BJ (cell line): ENCODE measurements at regions of chr11 and their contacts with region 1.

Region 1: DNA sequence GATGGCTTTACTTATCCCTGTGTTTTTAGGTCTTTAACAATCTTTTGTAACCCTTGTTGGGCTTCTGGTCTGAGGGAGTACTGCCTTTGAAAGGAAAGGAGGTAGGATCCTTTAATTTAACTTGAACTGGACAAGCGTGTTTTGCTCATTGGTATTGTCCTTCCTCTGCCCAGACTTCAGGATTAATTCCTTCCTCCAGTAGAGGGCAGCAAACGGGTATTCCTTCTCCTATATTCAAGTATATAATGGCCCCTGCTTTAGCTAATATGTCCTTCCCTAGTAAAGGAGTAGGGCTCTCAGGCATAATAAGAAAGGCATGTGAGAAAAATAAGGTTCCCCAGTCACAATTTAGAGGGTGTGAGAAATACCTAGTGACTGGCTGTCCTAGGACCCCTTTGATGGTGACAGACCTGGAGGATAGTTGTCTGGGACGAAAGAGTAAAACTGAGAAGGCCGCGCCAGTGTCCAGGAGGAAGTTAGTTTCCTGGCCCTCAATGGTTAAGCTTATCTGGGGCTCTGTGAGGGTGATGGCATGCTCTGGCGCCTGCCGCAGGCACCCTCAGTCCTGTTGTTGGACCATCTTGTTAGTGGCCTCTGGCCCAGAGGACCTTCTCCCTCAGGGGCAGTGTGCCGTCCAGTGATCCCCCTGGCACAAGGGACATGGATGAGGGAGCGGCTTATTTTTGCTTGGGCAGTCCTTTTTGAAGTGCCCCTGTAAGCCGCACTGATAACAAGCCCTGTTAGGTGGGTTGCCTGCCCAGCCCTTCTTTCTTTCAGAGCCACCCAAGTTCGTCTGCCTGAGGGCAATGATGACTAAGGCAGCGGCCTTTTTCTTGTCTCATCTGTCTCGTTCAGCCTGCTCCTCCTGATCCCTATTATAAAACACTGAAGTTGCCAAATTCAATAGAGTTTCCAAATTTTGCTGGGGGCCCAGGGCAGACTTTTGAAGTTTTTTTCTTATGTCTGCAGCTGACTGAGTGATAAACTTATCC is 51.8 kb downstream of the C11orf71 start:
- DNase-seq: peak; percentile 19
- H3K4me3 ChIP-seq: no peak overlapping the region
- H3K27me3 ChIP-seq: no peaks in the 10 kb centered on the region
- CTCF ChIP-seq: peak; percentile 59

Region 2: DNA sequence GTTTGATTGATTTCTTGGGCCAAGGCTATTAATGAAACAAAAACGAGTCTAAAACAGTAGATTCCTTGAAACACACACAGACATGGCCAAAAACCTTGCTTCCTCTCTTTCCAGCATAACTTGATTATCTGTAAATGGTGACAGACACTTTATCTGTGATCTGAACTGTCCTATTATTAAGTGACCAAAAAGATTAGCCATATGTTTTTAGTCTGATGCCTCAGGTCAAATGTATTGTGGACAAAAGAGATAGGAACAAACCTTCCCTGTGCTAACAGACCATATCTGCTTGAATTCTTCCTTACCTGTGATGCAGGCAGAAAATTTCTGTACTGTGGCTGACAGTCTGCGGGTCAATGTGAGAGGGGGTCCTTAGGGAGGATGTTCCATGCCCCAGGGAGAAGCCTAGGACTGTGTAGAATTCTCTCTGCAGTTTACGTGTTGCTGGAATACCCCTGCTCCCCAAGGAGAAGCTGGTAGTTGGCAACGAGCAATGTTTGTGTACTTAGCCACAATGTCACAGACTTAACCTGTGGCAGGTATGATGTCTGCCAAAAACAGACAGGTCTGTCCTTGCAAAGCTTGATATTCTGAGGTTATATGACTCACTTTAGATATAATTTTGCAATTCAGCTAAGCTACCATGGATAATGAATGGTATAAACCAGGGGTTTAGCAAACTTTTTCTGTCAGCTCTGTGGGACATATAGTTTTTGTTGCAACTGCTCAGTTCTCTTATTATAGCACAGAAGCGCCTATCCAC is 20.6 kb after region 1 on chr11:
- CTCF ChIA-PET with region 1: interaction called, 10 read pairs
- POLR2A ChIA-PET with region 1: interaction called, 7 read pairs
- DNase-seq: no peak
- H3K4me3 ChIP-seq: no peak overlapping the region
- H3K27me3 ChIP-seq: no peaks in the 10 kb centered on the region
- CTCF ChIP-seq: no peak